MCF 10A (cell line): ENCODE measurements at regions of chr7 and their contacts with region 1.

Region 1: GRCh38 chr7:30330134-30331111 is 46.0 kb downstream of the ZNRF2 start:
- DNase-seq: no peak
- H3K4me3 Mint-ChIP-seq: no peak overlapping the region
- H3K27ac Mint-ChIP-seq: no peak overlapping the region
- H3K4me1 Mint-ChIP-seq: peaks cover 32% of the 10 kb centered on the region
- H3K27me3 Mint-ChIP-seq: no peaks in the 10 kb centered on the region
- CTCF ChIP-seq: no peak

Region 2: GRCh38 chr7:30301751-30302150 is 28.7 kb before region 1 on chr7:
- CTCF ChIA-PET with region 1: interaction called, 3 read pairs
- POLR2A ChIA-PET with region 1: interaction called, 13 read pairs
- intact Hi-C with region 1: no loop called
- DNase-seq: peak; percentile 84
- H3K4me3 Mint-ChIP-seq: peak overlapping the region; percentile 31
- H3K27ac Mint-ChIP-seq: peak overlapping the region; percentile 27
- H3K4me1 Mint-ChIP-seq: peaks cover 29% of the 10 kb centered on the region
- H3K27me3 Mint-ChIP-seq: no peaks in the 10 kb centered on the region
- CTCF ChIP-seq: no peak

Region 3: GRCh38 chr7:30315589-30315988 is 14.8 kb before region 1 on chr7:
- CTCF ChIA-PET with region 1: interaction called, 4 read pairs
- POLR2A ChIA-PET with region 1: interaction called, 27 read pairs
- intact Hi-C with region 1: no loop called
- DNase-seq: no peak
- H3K4me3 Mint-ChIP-seq: no peak overlapping the region
- H3K27ac Mint-ChIP-seq: no peak overlapping the region
- H3K4me1 Mint-ChIP-seq: peaks cover 30% of the 10 kb centered on the region
- H3K27me3 Mint-ChIP-seq: no peaks in the 10 kb centered on the region
- CTCF ChIP-seq: no peak